Thyroid gland (tissue), 4 donors: ENCODE measurements at regions of chr14 and their contacts with region 1.

Region 1: DNA sequence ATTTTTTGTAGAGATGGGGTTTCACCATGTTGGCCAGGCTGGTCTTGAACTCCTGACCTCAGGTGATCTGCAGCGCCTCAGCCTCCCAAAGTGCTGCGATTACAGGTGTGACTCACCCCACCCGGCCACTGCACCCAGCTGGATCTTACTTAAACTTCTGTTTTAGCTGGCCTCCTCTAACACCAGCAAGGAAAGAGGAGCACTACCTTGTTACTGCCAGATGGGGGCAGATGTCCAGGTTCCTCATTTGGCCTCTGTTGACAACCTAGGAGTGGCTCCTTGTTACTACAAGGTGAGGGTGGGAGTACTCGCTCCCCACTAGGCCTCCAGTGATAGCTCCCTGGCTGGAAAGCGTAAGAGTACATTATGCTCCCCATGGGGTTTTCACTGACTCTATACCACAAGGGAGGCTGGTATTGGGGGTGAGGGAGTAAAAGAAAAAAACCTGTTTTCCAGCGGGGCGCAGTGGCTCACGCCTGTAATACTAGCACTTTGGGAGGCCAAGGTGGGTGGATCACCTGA is 13.1 kb upstream of the ARF6 start:
- DNase-seq: peak; percentile 24 to 41
- H3K4me3 ChIP-seq: no peak overlapping the region
- H3K27ac ChIP-seq: no peak overlapping the region
- H3K4me1 ChIP-seq: no peaks in the 10 kb centered on the region
- H3K27me3 ChIP-seq: no peaks in the 10 kb centered on the region
- CTCF ChIP-seq: peak; percentile 31 to 68 (median 54)
- POLR2A ChIP-seq: no peak

Region 2: GRCh38 chr14:49249022-49249421 is 630.7 kb before region 1 on chr14:
- intact Hi-C with region 1: no loop called
- DNase-seq: no peak
- H3K4me3 ChIP-seq: no peak overlapping the region
- H3K27ac ChIP-seq: no peak overlapping the region
- H3K4me1 ChIP-seq: no peaks in the 10 kb centered on the region
- H3K27me3 ChIP-seq: no peaks in the 10 kb centered on the region
- CTCF ChIP-seq: no peak
- POLR2A ChIP-seq: no peak

Region 3: DNA sequence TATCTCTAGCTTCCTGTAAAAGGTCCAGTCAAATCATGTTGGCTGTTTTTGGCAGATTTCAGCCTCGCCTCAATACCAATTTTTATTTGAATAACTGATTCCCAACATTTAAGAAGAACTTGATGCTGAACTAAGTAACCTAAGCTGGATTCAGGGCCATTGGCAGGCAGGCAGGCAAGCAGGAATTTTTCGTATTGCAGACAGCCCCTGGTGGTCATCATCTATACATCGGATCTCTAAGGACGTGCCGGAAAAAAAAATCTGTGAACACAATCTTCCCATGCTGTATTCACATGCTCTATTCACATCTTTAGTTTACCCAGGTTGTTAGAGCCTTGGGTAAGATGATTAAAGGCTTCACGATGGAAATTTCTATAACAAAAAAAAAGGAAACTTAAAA is 229.6 kb after region 1 on chr14:
- intact Hi-C with region 1: loop called (anchors 5 kb)
- DNase-seq: no peak
- H3K4me3 ChIP-seq: no peak overlapping the region
- H3K27ac ChIP-seq: peak overlapping the region in 1 of 3 donors; percentile 82
- H3K4me1 ChIP-seq: peaks cover 0 to under 1% of the 10 kb centered on the region in 2 donors
- H3K27me3 ChIP-seq: no peaks in the 10 kb centered on the region
- CTCF ChIP-seq: no peak
- POLR2A ChIP-seq: no peak